Gastrocnemius medialis (tissue), 4 donors: ENCODE measurements at regions of chr13 and their contacts with region 1.

Region 1: DNA sequence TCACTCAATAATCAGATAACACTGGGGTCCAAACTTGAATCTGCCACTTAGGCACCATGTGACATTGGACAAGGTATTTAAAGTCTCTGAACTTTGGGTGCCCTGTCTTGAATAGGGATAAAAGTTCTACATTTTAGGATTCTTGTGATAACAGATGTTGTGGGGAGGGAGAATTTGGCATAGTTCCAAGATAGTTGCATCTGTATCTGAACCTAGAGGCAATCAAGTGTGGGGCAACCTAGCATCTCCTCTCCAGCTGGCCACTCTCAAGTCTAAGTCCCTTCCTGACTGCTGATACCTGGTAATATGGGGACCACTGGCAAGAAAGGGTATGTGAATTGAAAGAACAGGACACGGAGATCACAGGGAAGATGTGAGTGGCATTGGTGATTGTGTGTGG is 256.1 kb downstream of the FOXO1 start:
- DNase-seq: no peak
- ATAC-seq: no peak
- H3K4me3 ChIP-seq: no peak overlapping the region
- H3K27ac ChIP-seq: peak overlapping the region in 3 of 4 donors; percentile 44 to 72 (median 67)
- H3K4me1 ChIP-seq: peaks cover 21 to 41% of the 10 kb centered on the region in 2 donors
- H3K27me3 ChIP-seq: no peaks in the 10 kb centered on the region
- CTCF ChIP-seq: no peak
- POLR2A ChIP-seq: no peak

Region 2: GRCh38 chr13:40438999-40439797 is 28.9 kb after region 1 on chr13:
- in situ Hi-C with region 1: no loop called
- intact Hi-C with region 1: loop called (anchors 2 kb)
- DNase-seq: no peak
- ATAC-seq: peak; percentile 10 to 16
- H3K4me3 ChIP-seq: peak overlapping the region; percentile 24 to 35 (median 32)
- H3K27ac ChIP-seq: peak overlapping the region; percentile 72 to 79 (median 76)
- H3K4me1 ChIP-seq: peaks cover 48 to 54% of the 10 kb centered on the region in 2 donors
- H3K27me3 ChIP-seq: no peaks in the 10 kb centered on the region
- CTCF ChIP-seq: no peak
- POLR2A ChIP-seq: no peak

Region 3: DNA sequence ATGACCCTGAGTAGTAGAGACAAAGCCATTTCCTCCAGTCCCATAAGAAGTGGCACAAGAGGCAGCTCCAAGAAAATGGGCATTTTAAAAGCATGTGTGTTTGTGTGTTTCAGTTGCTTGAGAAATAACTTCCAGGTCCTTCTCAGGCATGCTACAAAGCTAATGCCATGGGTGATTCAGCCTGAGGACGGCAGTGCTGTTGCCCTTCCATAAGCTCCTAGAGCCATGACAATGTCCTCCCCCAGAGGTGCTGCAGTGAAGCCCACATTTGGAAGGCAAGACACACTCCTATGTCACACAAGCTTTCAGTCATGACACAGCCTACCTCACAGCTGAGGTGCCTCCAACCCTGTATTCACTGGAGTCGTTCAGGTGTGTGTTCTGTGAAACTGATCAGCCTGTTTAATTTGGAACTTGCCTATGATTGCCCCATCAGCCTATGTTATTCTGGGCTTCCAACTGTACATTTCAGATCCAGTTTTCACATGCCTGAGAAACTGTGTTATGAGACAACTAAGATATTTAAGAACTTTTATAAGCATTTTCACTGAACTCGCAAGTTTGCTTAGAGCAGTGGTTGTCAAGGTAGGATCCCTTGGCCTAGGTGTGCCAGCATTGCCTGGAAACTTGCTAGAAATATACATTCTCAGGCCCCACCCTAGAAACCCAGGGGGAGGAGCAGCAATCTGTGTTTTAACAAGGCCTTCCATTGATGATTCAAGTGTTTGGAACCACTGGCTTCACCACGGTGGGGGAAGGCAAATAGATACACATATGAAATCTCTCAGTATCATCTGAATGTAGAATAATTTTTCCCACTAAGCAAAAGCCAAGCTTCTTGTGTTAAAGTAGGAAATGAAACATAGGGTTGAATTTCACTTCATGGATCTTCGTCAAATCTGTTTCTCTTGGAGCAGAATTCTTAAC is 42.7 kb after region 1 on chr13:
- in situ Hi-C with region 1: no loop called
- intact Hi-C with region 1: no loop called
- DNase-seq: no peak
- ATAC-seq: no peak
- H3K4me3 ChIP-seq: no peak overlapping the region
- H3K27ac ChIP-seq: no peak overlapping the region
- H3K4me1 ChIP-seq: no peaks in the 10 kb centered on the region
- H3K27me3 ChIP-seq: no peaks in the 10 kb centered on the region
- CTCF ChIP-seq: no peak
- POLR2A ChIP-seq: no peak

Region 4: DNA sequence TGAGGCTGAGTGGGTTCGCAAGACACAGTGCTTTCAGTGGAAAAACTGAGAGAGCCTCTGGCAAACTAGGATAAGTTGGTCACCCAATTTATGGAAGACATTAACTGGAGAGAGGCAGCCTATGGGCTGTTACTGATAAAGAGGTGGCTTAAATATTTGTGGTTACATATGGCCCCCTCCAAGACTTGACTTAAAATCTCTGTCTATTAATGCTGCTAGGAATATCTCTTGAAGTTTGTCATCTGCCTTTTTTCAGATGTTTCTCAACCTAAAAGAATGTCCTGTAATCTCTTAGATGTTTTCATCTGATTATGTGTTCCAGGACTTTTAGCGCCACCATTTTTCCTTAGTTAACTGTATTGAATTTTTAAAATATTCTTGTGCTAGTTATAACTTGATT is 955.3 kb after region 1 on chr13:
- in situ Hi-C with region 1: no loop called
- intact Hi-C with region 1: no loop called
- DNase-seq: no peak
- ATAC-seq: no peak
- H3K4me3 ChIP-seq: no peak overlapping the region
- H3K27ac ChIP-seq: no peak overlapping the region
- H3K4me1 ChIP-seq: no peaks in the 10 kb centered on the region
- H3K27me3 ChIP-seq: no peaks in the 10 kb centered on the region
- CTCF ChIP-seq: no peak
- POLR2A ChIP-seq: no peak